ENCODE measurements at regions of chr1 and their contacts with region 1.

Region 1: DNA sequence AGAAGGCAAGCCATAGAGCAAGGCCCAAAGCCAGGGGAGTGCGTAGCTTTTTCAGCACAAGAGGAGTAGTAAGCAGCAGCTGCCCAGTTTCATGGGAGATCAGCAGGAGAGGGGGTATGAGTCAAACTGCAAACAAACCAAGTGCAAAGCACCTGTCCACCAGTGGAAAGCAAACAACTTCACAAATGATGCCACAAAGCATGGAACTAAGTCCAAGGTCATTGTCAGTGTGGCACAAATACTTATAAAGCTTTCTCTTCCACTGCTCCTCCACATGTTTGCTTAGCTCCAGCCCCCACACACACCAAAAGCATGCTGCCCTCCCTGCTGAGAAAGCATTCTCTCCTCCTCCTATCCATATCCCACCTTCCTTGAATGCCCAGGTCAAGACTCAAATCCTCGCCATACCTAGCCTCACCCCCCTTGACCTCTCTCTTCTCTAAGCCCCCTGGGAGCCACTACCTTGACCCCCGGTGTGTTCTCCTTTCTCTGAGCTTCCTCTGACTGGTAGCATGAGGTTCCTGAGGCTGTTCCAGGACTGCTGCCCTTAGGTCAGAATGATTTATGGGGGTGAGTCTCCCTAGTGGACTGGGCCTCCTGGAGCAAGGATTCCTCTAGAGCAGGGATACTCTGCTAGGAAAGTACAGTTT is 70.4 kb downstream of the DMAP1 start:
- DNase-seq: peak; percentile 99
- ATAC-seq: peak; percentile 96
- H3K4me3 ChIP-seq: peak overlapping the region in 1 of 3 experiments; percentile 18; a peak in 1 of 6 replicates
- H3K27ac ChIP-seq: peak overlapping the region; percentile 79
- H3K4me1 ChIP-seq: peaks cover 44% of the 10 kb centered on the region
- H3K27me3 ChIP-seq: no peaks in the 10 kb centered on the region
- CTCF ChIP-seq: peak; percentile 15; the same call in 1 of the 2 replicates
- EP300 ChIP-seq: peak; percentile 89 to 91
- POLR2A ChIP-seq: peak; percentile 37 to 64; a peak in 2 of 4 replicates
- RAD21 ChIP-seq: no peak; the same call in 1 of the 2 replicates

Region 2: DNA sequence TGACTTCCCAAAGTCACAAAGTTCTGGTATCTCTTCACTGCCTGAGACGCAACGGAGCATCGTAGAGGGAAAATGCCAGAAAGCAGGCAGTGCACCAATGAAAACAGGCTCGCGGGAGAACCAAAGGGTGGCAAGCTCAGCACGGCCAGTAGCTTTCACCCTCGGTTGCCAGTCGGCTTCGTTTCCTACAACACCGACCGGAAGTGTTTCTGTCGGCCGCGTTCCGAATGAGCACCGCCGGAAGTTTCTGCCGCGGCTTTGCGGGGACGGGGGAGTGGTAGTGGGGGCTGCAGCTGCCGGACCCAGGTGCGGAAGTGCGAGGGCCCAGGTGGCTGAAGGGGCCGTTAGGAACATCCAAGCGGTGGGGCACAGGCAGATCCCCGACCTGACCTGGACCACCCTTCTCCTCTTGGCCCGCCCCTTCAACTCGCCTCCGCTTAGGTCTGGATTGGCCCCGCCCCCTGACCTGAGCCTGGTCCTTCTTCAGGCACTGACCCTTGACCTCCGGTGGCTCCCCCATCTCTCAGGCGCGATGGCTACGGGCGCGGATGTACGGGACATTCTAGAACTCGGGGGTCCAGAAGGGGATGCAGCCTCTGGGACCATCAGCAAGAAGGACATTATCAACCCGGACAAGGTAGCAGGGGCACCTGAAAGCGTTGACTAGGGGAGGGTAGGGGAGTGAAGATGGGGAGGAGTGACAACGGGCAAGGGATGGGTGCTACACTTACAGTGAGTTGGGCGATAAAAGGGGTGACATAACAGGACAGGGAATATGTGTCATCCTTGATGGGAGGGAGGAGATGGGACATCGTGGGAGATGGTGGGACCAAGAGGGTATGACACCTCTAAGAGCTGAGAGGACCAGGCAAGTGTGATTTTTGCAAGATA is 70.2 kb before region 1 on chr1 and contains the start of gene DMAP1:
- CTCF ChIA-PET with region 1: interaction called, 3 read pairs
- POLR2A ChIA-PET with region 1: interaction called, 34 read pairs
- in situ Hi-C with region 1: no loop called
- intact Hi-C with region 1: no loop called
- DNase-seq: peak; percentile 71
- ATAC-seq: peak; percentile 84
- H3K4me3 ChIP-seq: peak within 1 kb of the TSS; percentile 80 to 90 (median 83)
- H3K27ac ChIP-seq: peak within 1 kb of the TSS; percentile 20
- H3K4me1 ChIP-seq: peaks cover 36% of the 10 kb centered on the region
- H3K27me3 ChIP-seq: no peaks in the 10 kb centered on the region; a peak in 1 of 5 replicates
- CTCF ChIP-seq: peak; percentile 59
- EP300 ChIP-seq: peak; percentile 33 to 41; a peak in 2 of 4 replicates
- POLR2A ChIP-seq: peak; percentile 55 to 81
- RAD21 ChIP-seq: peak; percentile 70
- total RNA-seq, gene DMAP1: 17.5 and 17.6 TPM in 2 replicates

Region 3: GRCh38 chr1:44237721-44238457 is 45.8 kb before region 1 on chr1:
- CTCF ChIA-PET with region 1: no interaction called
- POLR2A ChIA-PET with region 1: interaction called, 9 read pairs
- in situ Hi-C with region 1: loop called (anchors 5 kb)
- intact Hi-C with region 1: no loop called
- DNase-seq: no peak
- ATAC-seq: peak; percentile 20; the same call in 1 of the 3 replicates
- H3K4me3 ChIP-seq: no peak overlapping the region
- H3K27ac ChIP-seq: no peak overlapping the region
- H3K4me1 ChIP-seq: peaks cover 22% of the 10 kb centered on the region
- H3K27me3 ChIP-seq: no peaks in the 10 kb centered on the region
- CTCF ChIP-seq: peak; percentile 25; the same call in 1 of the 2 replicates
- EP300 ChIP-seq: no peak
- POLR2A ChIP-seq: no peak
- RAD21 ChIP-seq: no peak

Region 4: DNA sequence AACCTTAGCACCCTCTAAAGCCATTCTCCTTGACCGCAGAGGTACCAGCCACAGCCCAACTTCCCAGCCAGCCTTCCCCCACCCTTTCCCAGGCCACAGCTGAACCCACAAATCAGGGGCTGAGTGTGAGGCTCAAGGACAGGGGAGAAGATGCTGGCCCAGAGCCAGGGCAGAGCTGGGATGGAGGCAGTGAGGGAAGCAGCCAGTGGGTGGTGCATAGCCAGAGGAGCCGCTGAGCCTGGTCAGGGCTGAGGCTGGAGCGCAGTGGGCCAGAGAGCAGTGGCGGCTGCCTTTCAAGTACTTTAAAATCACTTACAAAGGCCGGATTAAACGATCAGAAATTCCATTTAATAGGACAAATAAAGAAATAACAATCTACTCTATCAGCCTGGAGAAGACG is 34.1 kb before region 1 on chr1:
- CTCF ChIA-PET with region 1: no interaction called
- POLR2A ChIA-PET with region 1: interaction called, 11 read pairs
- in situ Hi-C with region 1: no loop called
- intact Hi-C with region 1: no loop called
- DNase-seq: no peak
- ATAC-seq: peak; percentile 45; the same call in 1 of the 3 replicates
- H3K4me3 ChIP-seq: no peak overlapping the region
- H3K27ac ChIP-seq: no peak overlapping the region
- H3K4me1 ChIP-seq: peaks cover 22% of the 10 kb centered on the region
- H3K27me3 ChIP-seq: no peaks in the 10 kb centered on the region
- CTCF ChIP-seq: no peak
- EP300 ChIP-seq: no peak
- POLR2A ChIP-seq: no peak
- RAD21 ChIP-seq: no peak

Region 5: DNA sequence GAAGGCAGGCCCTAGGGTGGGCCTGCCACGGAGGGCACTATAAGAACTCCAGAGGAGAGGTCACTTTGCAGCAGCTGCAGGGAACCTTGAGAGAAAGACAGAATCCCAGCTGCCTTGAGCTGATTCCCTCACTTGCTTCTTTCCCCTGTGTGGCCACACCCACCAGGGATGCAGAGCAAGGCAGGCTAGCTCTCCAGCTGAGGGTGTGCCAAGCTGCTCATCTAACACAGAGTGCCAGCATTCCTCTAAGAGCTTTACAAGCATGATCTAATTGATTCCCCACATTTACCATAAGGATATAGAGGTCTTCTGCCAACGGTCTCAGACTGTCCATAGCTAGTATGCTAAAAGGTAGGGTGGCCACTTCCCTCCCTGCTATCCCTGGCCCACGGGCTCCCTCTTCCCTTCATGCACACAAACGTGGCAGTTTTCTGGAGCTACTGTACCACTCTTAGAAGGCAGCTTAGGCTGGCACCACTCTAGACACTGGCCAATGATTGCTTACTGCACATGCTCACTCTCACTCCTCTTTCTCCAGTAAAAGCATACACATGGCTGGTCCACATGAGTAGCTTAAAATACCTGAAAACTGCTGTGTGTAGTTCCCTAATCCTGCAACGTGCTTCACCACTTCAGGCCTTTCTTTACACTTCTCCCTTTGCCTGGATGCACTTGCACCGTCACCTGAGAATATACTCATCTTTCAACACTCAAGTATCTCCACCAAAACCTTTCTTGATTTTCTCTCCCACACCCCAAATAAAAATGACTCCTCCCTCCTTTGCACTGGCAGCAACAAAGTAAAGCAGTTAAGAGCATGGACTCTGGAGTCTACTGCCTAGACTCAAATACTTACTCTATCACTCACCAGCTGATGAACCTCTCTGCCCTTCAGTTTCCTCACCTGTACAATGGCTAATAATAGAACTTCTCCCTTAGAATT is 12.7 kb before region 1 on chr1:
- CTCF ChIA-PET with region 1: no interaction called
- POLR2A ChIA-PET with region 1: interaction called, 36 read pairs
- in situ Hi-C with region 1: no loop called
- intact Hi-C with region 1: no loop called
- DNase-seq: no peak
- ATAC-seq: no peak
- H3K4me3 ChIP-seq: no peak overlapping the region
- H3K27ac ChIP-seq: no peak overlapping the region
- H3K4me1 ChIP-seq: peaks cover 11% of the 10 kb centered on the region
- H3K27me3 ChIP-seq: no peaks in the 10 kb centered on the region
- CTCF ChIP-seq: no peak
- EP300 ChIP-seq: no peak
- POLR2A ChIP-seq: no peak
- RAD21 ChIP-seq: no peak

Region 6: GRCh38 chr1:44294588-44295007 is 10.9 kb after region 1 on chr1:
- CTCF ChIA-PET with region 1: no interaction called
- POLR2A ChIA-PET with region 1: interaction called, 82 read pairs
- in situ Hi-C with region 1: no loop called
- intact Hi-C with region 1: loop called (anchors 2 kb)
- DNase-seq: peak; percentile 31
- ATAC-seq: peak; percentile 75
- H3K4me3 ChIP-seq: no peak overlapping the region
- H3K27ac ChIP-seq: no peak overlapping the region
- H3K4me1 ChIP-seq: peaks cover 40% of the 10 kb centered on the region
- H3K27me3 ChIP-seq: no peaks in the 10 kb centered on the region
- CTCF ChIP-seq: peak; percentile 72
- EP300 ChIP-seq: no peak
- POLR2A ChIP-seq: no peak
- RAD21 ChIP-seq: peak; percentile 70

Region 7: GRCh38 chr1:44318097-44319088 is 34.7 kb after region 1 on chr1:
- CTCF ChIA-PET with region 1: interaction called, 3 read pairs
- POLR2A ChIA-PET with region 1: interaction called, 3 read pairs
- in situ Hi-C with region 1: no loop called
- intact Hi-C with region 1: loop called (anchors 1 kb)
- DNase-seq: peak; percentile 34
- ATAC-seq: peak; percentile 54; the same call in 2 of the 3 replicates
- H3K4me3 ChIP-seq: no peak overlapping the region
- H3K27ac ChIP-seq: no peak overlapping the region
- H3K4me1 ChIP-seq: no peaks in the 10 kb centered on the region
- H3K27me3 ChIP-seq: no peaks in the 10 kb centered on the region
- CTCF ChIP-seq: peak; percentile 78
- EP300 ChIP-seq: no peak
- POLR2A ChIP-seq: no peak
- RAD21 ChIP-seq: peak; percentile 34; the same call in 1 of the 2 replicates

Region 8: GRCh38 chr1:44354268-44354839 is 70.7 kb after region 1 on chr1:
- CTCF ChIA-PET with region 1: no interaction called
- POLR2A ChIA-PET with region 1: no interaction called
- in situ Hi-C with region 1: no loop called
- intact Hi-C with region 1: no loop called
- DNase-seq: no peak
- ATAC-seq: no peak
- H3K4me3 ChIP-seq: peak overlapping the region; percentile 86 to 96 (median 89)
- H3K27ac ChIP-seq: peak overlapping the region; percentile 49
- H3K4me1 ChIP-seq: peaks cover 36% of the 10 kb centered on the region
- H3K27me3 ChIP-seq: 0 out of 5 replicates have a peak, but pooled peaks cover 0 to 3% of the 10 kb centered on the region in 2 experiments
- CTCF ChIP-seq: no peak
- EP300 ChIP-seq: no peak
- POLR2A ChIP-seq: no peak; a peak in 1 of 4 replicates
- RAD21 ChIP-seq: no peak

Region 9: DNA sequence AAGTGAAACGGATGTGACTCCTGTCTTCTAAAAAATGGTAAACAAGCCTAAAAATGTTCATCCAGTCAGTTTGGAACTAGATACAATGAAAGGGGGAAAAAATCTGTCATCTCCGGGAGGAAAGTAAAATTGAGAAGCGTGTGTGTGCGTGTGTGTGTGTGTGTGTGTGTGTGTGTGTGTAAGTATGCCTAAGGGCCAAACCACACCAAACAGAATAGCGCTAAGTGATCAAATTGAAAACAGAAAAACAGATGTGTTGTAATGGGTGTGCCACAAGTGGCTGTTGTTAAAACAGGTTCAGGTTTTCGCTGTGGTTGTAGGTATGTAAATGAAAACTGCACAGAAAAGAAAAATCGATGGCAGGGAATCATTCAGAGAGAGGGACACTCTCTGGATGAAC is 228.1 kb after region 1 on chr1:
- CTCF ChIA-PET with region 1: no interaction called
- POLR2A ChIA-PET with region 1: no interaction called
- in situ Hi-C with region 1: no loop called
- intact Hi-C with region 1: no loop called
- DNase-seq: no peak
- ATAC-seq: no peak
- H3K4me3 ChIP-seq: no peak overlapping the region
- H3K27ac ChIP-seq: no peak overlapping the region
- H3K4me1 ChIP-seq: peaks cover 23% of the 10 kb centered on the region
- H3K27me3 ChIP-seq: no peaks in the 10 kb centered on the region; a peak in 1 of 5 replicates
- CTCF ChIP-seq: no peak
- EP300 ChIP-seq: no peak
- POLR2A ChIP-seq: no peak
- RAD21 ChIP-seq: no peak